CD8-positive, alpha-beta T cell (primary cell): ENCODE measurements at regions of chr22 and their contacts with region 1.

Region 1: GRCh38 chr22:39900306-39901227 is at the start of gene GRAP2:
- DNase-seq: peak; percentile 49 to 93 (median 74)
- ATAC-seq: peak; percentile 92
- H3K4me3 ChIP-seq: peak within 1 kb of the TSS; percentile 77 to 80
- H3K4me3 Mint-ChIP-seq: peak within 1 kb of the TSS; percentile 97
- H3K27ac ChIP-seq: peak within 1 kb of the TSS; percentile 71 to 80
- H3K27ac Mint-ChIP-seq: peak within 1 kb of the TSS; percentile 91
- H3K4me1 ChIP-seq: peaks cover 42% of the 10 kb centered on the region
- H3K4me1 Mint-ChIP-seq: peaks cover 27% of the 10 kb centered on the region
- H3K27me3 ChIP-seq: no peaks in the 10 kb centered on the region
- H3K27me3 Mint-ChIP-seq: no peaks in the 10 kb centered on the region
- CTCF ChIP-seq: no peak
- total RNA-seq, gene GRAP2: 105 TPM

Region 2: GRCh38 chr22:39820256-39820655 is 80.3 kb before region 1 on chr22:
- CTCF ChIA-PET with region 1: no interaction called
- POLR2A ChIA-PET with region 1: no interaction called
- intact Hi-C with region 1: no loop called
- DNase-seq: no peak
- ATAC-seq: no peak
- H3K4me3 ChIP-seq: no peak overlapping the region
- H3K4me3 Mint-ChIP-seq: no peak overlapping the region
- H3K27ac ChIP-seq: no peak overlapping the region
- H3K27ac Mint-ChIP-seq: no peak overlapping the region
- H3K4me1 ChIP-seq: no peaks in the 10 kb centered on the region
- H3K4me1 Mint-ChIP-seq: no peaks in the 10 kb centered on the region
- H3K27me3 ChIP-seq: no peaks in the 10 kb centered on the region
- H3K27me3 Mint-ChIP-seq: no peaks in the 10 kb centered on the region
- CTCF ChIP-seq: no peak

Region 3: GRCh38 chr22:39917776-39918495 is 17.4 kb after region 1 on chr22:
- CTCF ChIA-PET with region 1: interaction called, 7 read pairs
- POLR2A ChIA-PET with region 1: interaction called, 260 read pairs
- intact Hi-C with region 1: loop called (anchors 2 kb)
- DNase-seq: peak in 1 of 9 experiments; percentile 51
- ATAC-seq: no peak
- H3K4me3 ChIP-seq: peak overlapping the region; percentile 15 to 46
- H3K4me3 Mint-ChIP-seq: peak overlapping the region; percentile 80
- H3K27ac ChIP-seq: peak overlapping the region; percentile 48 to 80
- H3K27ac Mint-ChIP-seq: peak overlapping the region; percentile 97
- H3K4me1 ChIP-seq: peaks cover 94% of the 10 kb centered on the region
- H3K4me1 Mint-ChIP-seq: peaks cover 91% of the 10 kb centered on the region
- H3K27me3 ChIP-seq: no peaks in the 10 kb centered on the region
- H3K27me3 Mint-ChIP-seq: no peaks in the 10 kb centered on the region
- CTCF ChIP-seq: no peak

Region 4: DNA sequence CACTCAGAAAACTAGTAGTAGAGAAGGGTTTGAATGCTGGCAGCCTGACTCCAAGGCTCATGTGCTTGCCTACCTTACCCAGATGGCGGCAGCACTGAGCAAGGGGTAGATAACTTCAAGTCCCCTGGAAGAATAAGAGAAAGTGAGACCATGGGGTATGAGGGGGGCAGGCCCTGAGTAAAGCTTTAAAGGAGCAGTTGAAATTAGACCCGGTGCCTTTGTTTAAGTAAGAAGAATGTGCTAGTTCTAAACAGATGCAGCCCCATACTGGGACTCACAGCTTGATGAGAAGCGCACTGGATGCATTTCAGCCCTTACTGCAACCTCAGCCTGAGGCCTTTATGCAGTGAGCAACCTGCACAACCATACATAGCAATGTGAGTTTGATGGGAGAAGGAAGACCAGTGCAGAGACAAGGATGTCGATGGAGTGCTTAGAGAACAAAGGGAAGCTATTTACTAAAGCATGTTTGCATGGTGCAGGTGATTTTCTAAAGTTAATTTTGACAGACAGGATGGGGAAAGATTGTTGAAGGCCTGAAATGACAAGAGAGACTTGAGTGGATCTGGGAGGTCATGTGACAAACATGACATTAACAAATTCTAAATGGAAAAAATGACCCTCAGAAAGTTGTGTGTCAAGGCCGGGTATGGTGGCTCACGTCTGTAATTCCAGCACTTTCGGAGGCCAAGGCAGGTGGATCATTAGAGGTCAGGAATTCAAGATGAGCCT is 32.5 kb after region 1 on chr22:
- CTCF ChIA-PET with region 1: interaction called, 35 read pairs
- POLR2A ChIA-PET with region 1: interaction called, 260 read pairs
- intact Hi-C with region 1: loop called (anchors 2 kb)
- DNase-seq: peak in 7 of 9 experiments; percentile 27 to 85 (median 72)
- ATAC-seq: peak; percentile 66
- H3K4me3 ChIP-seq: peak overlapping the region in 1 of 2 experiments; percentile 35
- H3K4me3 Mint-ChIP-seq: peak overlapping the region; percentile 77
- H3K27ac ChIP-seq: peak overlapping the region; percentile 72
- H3K27ac Mint-ChIP-seq: no peak overlapping the region
- H3K4me1 ChIP-seq: peaks cover 98% of the 10 kb centered on the region
- H3K4me1 Mint-ChIP-seq: peaks cover 54% of the 10 kb centered on the region
- H3K27me3 ChIP-seq: no peaks in the 10 kb centered on the region
- H3K27me3 Mint-ChIP-seq: no peaks in the 10 kb centered on the region
- CTCF ChIP-seq: peak; percentile 62

Region 5: GRCh38 chr22:39946503-39947219 is 46.1 kb after region 1 on chr22:
- CTCF ChIA-PET with region 1: interaction called, 50 read pairs
- POLR2A ChIA-PET with region 1: interaction called, 7 read pairs
- intact Hi-C with region 1: loop called in 1 of 2 experiments (anchors 2 kb)
- DNase-seq: peak in 1 of 9 experiments; percentile 40
- ATAC-seq: no peak
- H3K4me3 ChIP-seq: no peak overlapping the region
- H3K4me3 Mint-ChIP-seq: peak overlapping the region; percentile 66
- H3K27ac ChIP-seq: peak overlapping the region; percentile 4 to 52
- H3K27ac Mint-ChIP-seq: no peak overlapping the region
- H3K4me1 ChIP-seq: peaks cover 100% of the 10 kb centered on the region
- H3K4me1 Mint-ChIP-seq: peaks cover 98% of the 10 kb centered on the region
- H3K27me3 ChIP-seq: no peaks in the 10 kb centered on the region
- H3K27me3 Mint-ChIP-seq: no peaks in the 10 kb centered on the region
- CTCF ChIP-seq: no peak

Region 6: GRCh38 chr22:39960791-39961746 is 60.5 kb after region 1 on chr22:
- CTCF ChIA-PET with region 1: interaction called, 5 read pairs
- POLR2A ChIA-PET with region 1: no interaction called
- intact Hi-C with region 1: loop called in 1 of 2 experiments (anchors 2 kb)
- DNase-seq: peak; percentile 15 to 90 (median 69)
- ATAC-seq: peak; percentile 82
- H3K4me3 ChIP-seq: no peak overlapping the region
- H3K4me3 Mint-ChIP-seq: peak overlapping the region; percentile 19
- H3K27ac ChIP-seq: peak overlapping the region; percentile 15 to 80
- H3K27ac Mint-ChIP-seq: peak overlapping the region; percentile 92
- H3K4me1 ChIP-seq: peaks cover 60% of the 10 kb centered on the region
- H3K4me1 Mint-ChIP-seq: peaks cover 69% of the 10 kb centered on the region
- H3K27me3 ChIP-seq: no peaks in the 10 kb centered on the region
- H3K27me3 Mint-ChIP-seq: no peaks in the 10 kb centered on the region
- CTCF ChIP-seq: no peak

Region 7: DNA sequence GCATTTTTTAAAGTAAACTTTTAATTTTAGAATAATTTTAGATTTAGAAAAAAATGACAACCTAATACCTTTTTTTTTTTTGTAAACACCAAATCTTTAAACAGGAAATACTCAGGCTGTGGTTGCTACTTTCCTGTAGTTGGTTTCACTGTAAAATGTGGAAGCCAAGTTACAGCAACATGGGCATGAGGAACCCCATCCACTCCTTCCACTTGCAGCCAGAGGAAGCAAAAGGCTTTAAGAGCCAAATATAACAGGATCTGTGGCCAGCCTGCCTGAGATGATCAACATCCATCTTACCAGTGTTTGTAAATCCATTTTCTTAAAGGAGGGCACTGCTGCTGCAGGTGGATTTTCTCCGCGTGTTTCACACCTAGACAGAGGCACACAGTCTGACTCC is 343.3 kb after region 1 on chr22:
- CTCF ChIA-PET with region 1: no interaction called
- POLR2A ChIA-PET with region 1: no interaction called
- intact Hi-C with region 1: loop called in 1 of 2 experiments (anchors 10 kb)
- DNase-seq: peak in 3 of 9 experiments; percentile 22 to 68 (median 47)
- ATAC-seq: no peak
- H3K4me3 ChIP-seq: no peak overlapping the region
- H3K4me3 Mint-ChIP-seq: peak overlapping the region; percentile 38
- H3K27ac ChIP-seq: peak overlapping the region in 1 of 2 experiments; percentile 11
- H3K27ac Mint-ChIP-seq: peak overlapping the region; percentile 71
- H3K4me1 ChIP-seq: peaks cover 78% of the 10 kb centered on the region
- H3K4me1 Mint-ChIP-seq: peaks cover 80% of the 10 kb centered on the region
- H3K27me3 ChIP-seq: no peaks in the 10 kb centered on the region
- H3K27me3 Mint-ChIP-seq: no peaks in the 10 kb centered on the region
- CTCF ChIP-seq: no peak